ENCODE measurements at regions of chr3 and their contacts with region 1.

Region 1: DNA sequence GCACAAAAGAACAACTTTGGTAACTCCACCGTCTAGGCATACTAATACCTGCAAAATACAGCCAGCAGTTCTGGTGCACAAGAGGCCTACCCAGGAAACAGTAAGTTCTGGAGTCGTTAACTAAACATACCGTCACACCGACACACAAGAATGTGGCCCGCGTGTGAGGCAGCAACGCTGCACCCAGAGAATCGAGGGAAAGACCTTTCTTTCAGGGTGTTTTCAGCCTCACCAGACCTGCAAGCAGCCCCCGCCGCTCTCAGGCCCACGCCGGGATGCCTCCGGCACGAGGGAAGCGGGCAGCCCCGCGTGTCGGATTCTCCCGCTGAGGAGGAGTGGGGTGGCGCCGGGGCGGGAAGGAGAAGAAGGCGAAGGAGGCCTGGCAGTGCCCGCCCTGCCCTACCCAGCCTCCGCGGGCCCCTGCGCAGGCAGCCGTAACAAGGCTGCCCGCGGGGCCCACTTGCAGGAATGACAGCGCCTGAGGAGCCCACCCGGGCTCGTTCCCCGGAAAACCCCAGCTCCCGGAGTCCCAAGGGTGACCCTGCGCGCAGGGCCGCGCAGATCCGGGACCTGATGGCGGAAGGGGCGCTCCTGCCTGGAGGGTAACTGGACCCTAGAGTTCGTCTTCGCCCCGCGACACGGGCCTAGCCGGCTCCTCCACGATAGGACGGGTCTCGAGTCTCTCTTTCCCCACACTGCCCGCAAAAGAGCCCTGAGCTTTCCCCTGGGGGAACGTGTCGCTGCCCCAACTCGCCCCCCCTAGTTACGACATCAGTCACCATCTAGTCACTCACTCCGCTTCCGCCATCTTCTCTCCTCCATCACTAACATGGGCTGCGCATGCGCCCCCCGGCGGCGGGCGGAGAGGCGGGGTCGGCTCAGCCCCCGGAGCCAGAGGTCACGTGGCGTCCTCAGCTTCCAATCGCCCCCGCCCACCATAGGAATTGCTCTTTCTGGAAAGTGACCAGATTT is at the start of gene PHC3:
- DNase-seq: peak; percentile 90
- H3K4me3 Mint-ChIP-seq: peak within 1 kb of the TSS; percentile 94
- H3K27ac Mint-ChIP-seq: peak within 1 kb of the TSS; percentile 99
- H3K4me1 Mint-ChIP-seq: peaks cover 22% of the 10 kb centered on the region
- H3K27me3 Mint-ChIP-seq: no peaks in the 10 kb centered on the region
- total RNA-seq, gene PHC3: 48.3 and 52.0 TPM in 2 replicates

Region 2: DNA sequence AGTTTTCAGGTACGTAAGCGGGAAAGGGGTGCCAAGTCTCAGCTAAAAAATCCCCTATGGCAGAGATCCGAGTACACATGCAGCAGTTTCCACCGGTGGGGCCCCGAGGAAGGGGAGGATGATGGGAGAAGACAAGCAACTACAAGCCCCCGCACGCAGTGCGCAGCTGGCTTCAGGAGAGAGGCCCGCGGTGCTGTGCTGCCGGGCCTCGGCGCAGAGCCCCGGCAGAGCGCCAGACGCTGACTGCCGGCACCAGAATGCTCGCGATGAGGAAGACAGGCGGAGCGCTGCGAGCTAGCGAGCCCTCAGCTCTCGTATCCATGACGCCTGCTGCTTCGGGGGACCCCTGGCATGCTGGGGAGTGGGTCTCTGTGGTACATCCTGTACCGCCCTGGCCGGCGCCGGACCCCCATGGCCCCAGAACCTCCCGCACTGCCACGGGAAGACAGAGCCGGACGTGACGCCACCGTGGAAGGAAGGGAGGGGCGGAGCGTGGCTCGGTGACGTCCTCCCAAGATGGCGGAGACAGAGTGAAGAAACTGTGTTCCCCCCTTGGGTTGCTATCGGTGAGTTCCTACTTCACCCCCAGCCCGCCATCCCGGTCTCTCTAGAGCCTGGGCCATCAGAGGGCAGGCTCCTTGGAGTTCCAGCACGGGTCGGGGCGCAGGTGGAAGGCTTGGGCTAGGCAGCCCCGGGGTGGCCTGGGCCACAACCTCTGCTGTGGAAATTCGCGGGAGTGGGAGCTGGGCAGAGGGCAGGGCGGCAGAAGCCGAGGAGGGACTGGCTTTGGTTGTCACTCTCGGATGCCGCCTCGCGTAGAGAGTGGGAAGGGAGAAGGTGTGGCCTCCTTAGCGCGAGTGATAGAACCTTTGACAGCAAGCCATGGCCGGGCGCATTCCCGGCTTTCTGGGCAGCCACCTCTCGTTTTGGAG is 408.0 kb before region 1 on chr3 and contains the start of gene MYNN:
- intact Hi-C with region 1: loop called (anchors 2 kb)
- DNase-seq: peak; percentile 90
- H3K4me3 Mint-ChIP-seq: peak within 1 kb of the TSS; percentile 96
- H3K27ac Mint-ChIP-seq: peak within 1 kb of the TSS; percentile 99
- H3K4me1 Mint-ChIP-seq: peaks cover 31% of the 10 kb centered on the region
- H3K27me3 Mint-ChIP-seq: no peaks in the 10 kb centered on the region
- total RNA-seq, gene MYNN: 13.8 and 15.5 TPM in 2 replicates

Region 3: GRCh38 chr3:169966428-169966950 is 214.7 kb before region 1 on chr3 and contains the start of gene SEC62:
- intact Hi-C with region 1: loop called (anchors 1 kb)
- DNase-seq: peak; percentile 88
- H3K4me3 Mint-ChIP-seq: peak within 1 kb of the TSS; percentile 91
- H3K27ac Mint-ChIP-seq: peak within 1 kb of the TSS; percentile 99
- H3K4me1 Mint-ChIP-seq: peaks cover 41% of the 10 kb centered on the region
- H3K27me3 Mint-ChIP-seq: peaks cover 5% of the 10 kb centered on the region
- total RNA-seq, gene SEC62: 74.2 and 78.4 TPM in 2 replicates

Region 4: DNA sequence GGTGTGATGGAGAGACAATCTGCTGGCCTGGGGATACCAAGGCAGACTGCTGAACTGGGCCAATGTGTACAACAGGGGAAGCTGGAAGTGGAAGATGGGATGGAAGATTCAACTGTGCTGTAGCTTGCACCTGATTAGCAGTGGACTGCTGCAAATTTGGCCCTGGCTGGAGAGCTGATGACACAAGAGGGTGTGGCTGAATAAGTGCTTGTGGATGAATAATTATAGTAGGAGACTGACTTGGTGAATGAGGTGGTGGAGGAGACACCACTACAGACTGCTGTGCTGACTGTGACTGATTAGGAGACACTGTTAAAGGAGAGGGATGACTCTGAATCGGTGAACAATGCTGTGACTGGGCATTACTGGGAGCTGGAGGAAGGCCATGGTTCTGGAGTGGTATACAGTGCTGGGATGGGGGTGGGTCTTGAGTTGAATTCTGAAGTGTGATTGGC is 52.2 kb before region 1 on chr3:
- intact Hi-C with region 1: loop called (anchors 5 kb)
- DNase-seq: no peak
- H3K4me3 Mint-ChIP-seq: peak overlapping the region; percentile 48
- H3K27ac Mint-ChIP-seq: peak overlapping the region; percentile 72
- H3K4me1 Mint-ChIP-seq: peaks cover 18% of the 10 kb centered on the region
- H3K27me3 Mint-ChIP-seq: no peaks in the 10 kb centered on the region

Region 5: DNA sequence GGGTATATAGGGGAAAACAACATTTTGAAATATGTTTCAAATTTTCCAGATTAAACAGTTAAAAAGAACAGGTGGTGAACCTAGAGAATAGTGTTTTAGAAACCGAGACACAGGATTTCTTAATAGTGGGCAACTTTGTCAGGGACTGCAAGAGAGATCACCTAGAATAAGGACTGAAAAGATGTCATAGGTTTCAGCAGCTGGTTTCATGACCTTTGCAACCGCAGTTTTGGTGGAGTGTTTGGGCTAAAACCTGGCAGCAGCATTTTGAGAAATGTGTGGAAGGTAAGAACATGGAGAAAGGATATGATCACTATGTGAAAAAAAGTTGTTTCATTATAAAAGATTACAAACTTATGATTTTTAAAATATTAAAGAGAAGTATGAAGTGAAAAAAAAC is 76.0 kb after region 1 on chr3:
- intact Hi-C with region 1: loop called (anchors 2 kb)
- DNase-seq: no peak
- H3K4me3 Mint-ChIP-seq: no peak overlapping the region
- H3K27ac Mint-ChIP-seq: peak overlapping the region; percentile 54
- H3K4me1 Mint-ChIP-seq: peaks cover 37% of the 10 kb centered on the region
- H3K27me3 Mint-ChIP-seq: no peaks in the 10 kb centered on the region